ENCODE measurements at regions of chr4 and their contacts with region 1.

Region 1: GRCh38 chr4:24419181-24420034 is 164.9 kb downstream of the DHX15 start:
- DNase-seq: peak; percentile 28
- H3K4me3 Mint-ChIP-seq: no peak overlapping the region
- H3K27ac Mint-ChIP-seq: no peak overlapping the region
- H3K4me1 Mint-ChIP-seq: peaks cover 1% of the 10 kb centered on the region
- H3K27me3 Mint-ChIP-seq: no peaks in the 10 kb centered on the region

Region 2: GRCh38 chr4:22901631-22902030 is 1517.8 kb before region 1 on chr4:
- intact Hi-C with region 1: loop called (anchors 5 kb)
- DNase-seq: no peak
- H3K4me3 Mint-ChIP-seq: no peak overlapping the region
- H3K27ac Mint-ChIP-seq: no peak overlapping the region
- H3K4me1 Mint-ChIP-seq: no peaks in the 10 kb centered on the region
- H3K27me3 Mint-ChIP-seq: no peaks in the 10 kb centered on the region

Region 3: GRCh38 chr4:23135792-23136645 is 1283.4 kb before region 1 on chr4:
- intact Hi-C with region 1: loop called (anchors 2 kb)
- DNase-seq: no peak
- H3K4me3 Mint-ChIP-seq: no peak overlapping the region
- H3K27ac Mint-ChIP-seq: no peak overlapping the region
- H3K4me1 Mint-ChIP-seq: no peaks in the 10 kb centered on the region
- H3K27me3 Mint-ChIP-seq: no peaks in the 10 kb centered on the region

Region 4: DNA sequence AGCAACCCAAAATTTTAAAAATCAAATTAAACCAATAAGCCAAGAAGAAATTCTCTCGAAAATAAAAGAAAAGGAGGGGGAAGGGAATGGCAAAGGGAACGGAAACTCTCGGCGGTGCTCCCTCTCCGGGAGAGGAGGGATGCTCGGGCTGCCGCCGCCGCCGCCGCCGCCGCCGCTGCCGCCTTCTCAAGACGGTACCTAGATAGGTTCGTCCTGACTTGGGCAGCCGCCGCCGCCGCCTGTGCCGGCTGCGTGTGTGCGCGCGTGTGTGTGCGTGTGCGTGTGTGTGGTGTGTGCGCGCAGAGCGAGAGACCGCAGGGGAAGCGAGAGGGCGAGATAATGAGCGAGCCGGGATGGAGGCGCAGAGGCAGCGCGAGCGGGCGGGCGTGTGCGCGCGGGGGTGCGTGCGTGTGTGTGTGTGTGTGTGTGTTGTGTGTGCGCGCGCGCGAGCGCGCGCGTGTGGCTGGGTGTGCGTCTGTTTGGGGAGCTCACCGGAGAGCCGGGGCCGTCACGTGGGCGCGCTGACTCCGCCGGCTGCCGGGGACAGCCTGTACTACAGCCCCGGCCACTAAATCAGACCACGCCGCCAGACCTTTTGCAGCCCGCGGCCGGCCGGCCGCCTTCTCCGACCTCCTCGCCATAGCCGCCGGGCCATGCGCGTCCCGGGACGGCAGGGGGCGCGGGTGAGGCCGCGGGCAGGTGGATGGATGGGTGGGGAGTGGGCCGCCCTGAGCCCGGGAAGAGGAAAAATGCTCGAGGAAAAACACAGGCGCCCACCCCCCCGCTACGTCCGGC is 53.3 kb after region 1 on chr4:
- intact Hi-C with region 1: no loop called
- DNase-seq: peak; percentile 53
- H3K4me3 Mint-ChIP-seq: peak overlapping the region; percentile 96
- H3K27ac Mint-ChIP-seq: peak overlapping the region; percentile 57
- H3K4me1 Mint-ChIP-seq: peaks cover 31% of the 10 kb centered on the region
- H3K27me3 Mint-ChIP-seq: peaks cover 72% of the 10 kb centered on the region